Activated CD4-positive, alpha-beta T cell treated with anti-CD3 and anti-CD28 coated beads, Interleukin-2, amount 10 ng/mL, durations not matched to agents 24 days and 14 days (primary cell): ENCODE measurements at regions of chr11 and their contacts with region 1.

Region 1: GRCh38 chr11:19027829-19028595 is 32.5 kb downstream of the MRGPRX2 start:
- DNase-seq: no peak
- H3K4me3 Mint-ChIP-seq: no peak overlapping the region
- H3K27ac Mint-ChIP-seq: peak overlapping the region; percentile 64
- H3K4me1 Mint-ChIP-seq: peaks cover 18% of the 10 kb centered on the region
- H3K27me3 Mint-ChIP-seq: peaks cover 1% of the 10 kb centered on the region

Region 2: GRCh38 chr11:19060629-19061028 is 32.6 kb after region 1 on chr11 and contains the start of gene MRGPRX2:
- intact Hi-C with region 1: loop called (anchors 2 kb)
- DNase-seq: peak; percentile 71
- H3K4me3 Mint-ChIP-seq: no peak within 1 kb of the TSS
- H3K27ac Mint-ChIP-seq: no peak within 1 kb of the TSS
- H3K4me1 Mint-ChIP-seq: peaks cover 16% of the 10 kb centered on the region
- H3K27me3 Mint-ChIP-seq: peaks cover 21% of the 10 kb centered on the region
- total RNA-seq, gene MRGPRX2: 0.12 and 0.21 TPM in 2 replicates